AG04449 (cell line): ENCODE measurements at regions of chr11 and their contacts with region 1.

Region 1: DNA sequence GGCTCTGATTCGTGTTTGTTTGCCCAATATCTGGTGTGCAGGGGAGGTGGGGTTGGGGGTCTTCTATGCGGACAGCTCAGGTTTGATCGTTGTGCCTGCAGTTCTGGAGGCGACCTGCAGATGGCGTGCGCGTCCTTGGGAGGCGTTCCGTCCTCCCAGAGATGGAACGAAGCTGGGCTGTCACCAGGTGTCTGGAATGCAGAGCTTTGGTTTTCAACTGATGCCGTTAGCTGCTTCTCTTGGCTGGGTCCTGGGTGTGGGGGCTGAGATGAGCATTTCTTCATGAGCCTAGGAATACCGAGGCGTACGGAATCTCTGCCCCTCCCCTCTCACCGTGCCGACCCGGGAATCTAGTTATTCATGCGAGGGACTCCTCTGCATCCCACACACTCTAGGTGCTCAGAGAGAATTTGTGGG is 98.6 kb downstream of the CEP164 start:
- DNase-seq: no peak
- H3K4me3 ChIP-seq: no peak overlapping the region
- CTCF ChIP-seq: peak; percentile 96

Region 2: GRCh38 chr11:117387992-117388755 is 38.1 kb before region 1 on chr11:
- CTCF ChIA-PET with region 1: interaction called, 13 read pairs
- POLR2A ChIA-PET with region 1: no interaction called
- DNase-seq: peak; percentile 73
- H3K4me3 ChIP-seq: no peak overlapping the region
- CTCF ChIP-seq: no peak

Region 3: DNA sequence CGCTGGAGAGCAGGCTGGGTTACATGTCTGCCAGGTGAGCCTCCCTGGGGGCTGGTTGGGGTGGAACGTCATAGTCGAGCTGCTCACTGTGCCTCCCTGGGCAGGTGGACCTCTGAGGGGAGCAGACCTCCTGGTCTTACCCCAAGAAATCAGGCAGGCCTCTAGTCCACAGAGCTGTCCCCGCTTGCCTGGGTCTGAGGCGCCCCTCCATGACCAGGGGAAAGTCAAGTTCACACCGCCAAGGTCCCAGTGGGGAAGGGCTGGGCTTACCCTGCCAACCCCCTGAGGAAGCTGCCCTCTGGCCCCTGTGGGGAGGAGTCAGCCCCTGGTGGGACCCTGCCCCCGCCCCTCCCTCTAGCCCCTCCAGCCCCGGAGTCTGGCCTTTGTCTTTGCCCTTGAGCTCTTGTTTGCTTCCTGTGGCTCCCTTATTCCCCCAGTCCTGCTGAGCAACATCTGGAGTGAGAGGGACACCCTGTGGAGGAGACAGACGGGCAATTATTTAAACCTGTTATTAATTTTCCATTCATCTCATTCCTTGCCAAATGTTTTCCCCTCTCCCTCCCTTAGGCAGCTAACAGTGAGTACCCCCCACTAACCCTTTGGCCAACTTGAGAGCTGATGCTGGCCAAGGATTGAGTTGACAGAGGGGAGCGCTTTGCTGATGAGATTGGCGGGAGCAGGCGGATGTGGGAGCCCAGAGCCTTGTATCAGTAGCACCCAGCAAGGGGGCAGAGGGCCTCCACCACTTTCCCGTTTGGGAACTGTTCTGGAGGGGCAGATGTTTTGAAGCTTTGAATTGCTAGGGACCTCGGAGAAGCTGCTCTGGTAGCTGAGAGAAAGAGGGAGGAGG is 15.2 kb before region 1 on chr11:
- CTCF ChIA-PET with region 1: interaction called, 107 read pairs
- POLR2A ChIA-PET with region 1: no interaction called
- DNase-seq: no peak
- H3K4me3 ChIP-seq: no peak overlapping the region
- CTCF ChIP-seq: no peak

Region 4: GRCh38 chr11:117443266-117444195 is 17.3 kb after region 1 on chr11:
- CTCF ChIA-PET with region 1: interaction called, 26 read pairs
- POLR2A ChIA-PET with region 1: no interaction called
- DNase-seq: no peak
- H3K4me3 ChIP-seq: no peak overlapping the region
- CTCF ChIP-seq: peak; percentile 62

Region 5: GRCh38 chr11:117621226-117621625 is 194.9 kb after region 1 on chr11:
- CTCF ChIA-PET with region 1: interaction called, 51 read pairs
- POLR2A ChIA-PET with region 1: no interaction called
- DNase-seq: no peak
- H3K4me3 ChIP-seq: no peak overlapping the region
- CTCF ChIP-seq: peak; percentile 21

Region 6: GRCh38 chr11:117817368-117818040 is 391.2 kb after region 1 on chr11:
- CTCF ChIA-PET with region 1: interaction called, 151 read pairs
- POLR2A ChIA-PET with region 1: no interaction called
- DNase-seq: no peak
- H3K4me3 ChIP-seq: no peak overlapping the region
- CTCF ChIP-seq: peak; percentile 94

Region 7: DNA sequence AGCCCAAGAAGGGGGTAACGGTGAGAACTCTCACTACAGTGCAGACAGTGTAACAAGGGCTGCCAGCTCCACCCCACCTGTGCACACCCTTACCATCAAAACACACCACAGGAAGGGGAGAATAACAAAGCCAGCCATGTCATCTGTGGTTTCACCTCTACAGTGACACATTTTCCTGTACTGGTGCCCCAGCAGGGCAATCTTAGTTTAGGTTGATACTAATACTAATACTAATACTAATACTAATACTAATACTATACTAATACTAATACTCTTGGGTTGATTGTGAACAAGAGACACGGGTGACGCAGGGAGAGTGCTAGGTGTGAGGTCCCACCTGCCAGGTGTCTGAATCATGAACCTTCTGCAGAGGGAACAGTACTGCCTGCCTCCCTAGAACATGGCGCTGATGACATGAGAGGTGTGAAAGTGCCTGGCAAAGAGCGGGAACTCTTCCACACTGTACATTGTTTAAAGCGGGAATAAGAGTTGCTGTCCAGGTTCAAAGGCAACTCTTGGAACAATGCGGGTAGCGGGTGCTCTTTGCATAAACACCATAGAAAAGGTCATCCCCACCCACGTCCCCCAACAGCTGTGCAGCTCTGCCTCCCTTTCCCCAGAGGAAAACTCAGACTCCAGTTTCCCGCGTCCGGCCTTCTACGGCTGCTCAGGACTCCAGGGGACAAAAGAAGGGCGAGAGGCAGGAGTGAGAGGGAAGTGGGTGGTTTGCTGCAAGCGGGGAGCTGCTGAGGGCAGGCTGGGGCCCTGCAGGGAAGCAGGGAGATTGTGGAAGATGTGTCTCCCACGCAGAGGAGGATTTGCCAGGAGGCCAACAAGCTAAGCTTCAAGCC is 625.6 kb after region 1 on chr11:
- CTCF ChIA-PET with region 1: interaction called, 11 read pairs
- POLR2A ChIA-PET with region 1: no interaction called
- DNase-seq: no peak
- H3K4me3 ChIP-seq: no peak overlapping the region
- CTCF ChIP-seq: no peak